Activated B cell treated with CpG ODN at 0.5 μM for 24 hours (primary cell): ENCODE measurements at regions of chr5 and their contacts with region 1.

Region 1: GRCh38 chr5:115169487-115170133 is at the start of gene TRIM36:
- DNase-seq: peak; percentile 98
- ATAC-seq: peak; percentile 92
- H3K4me3 Mint-ChIP-seq: peak within 1 kb of the TSS; percentile 92
- H3K27ac Mint-ChIP-seq: peak within 1 kb of the TSS; percentile 69
- H3K4me1 Mint-ChIP-seq: peaks cover 16% of the 10 kb centered on the region
- H3K27me3 Mint-ChIP-seq: peaks cover 39% of the 10 kb centered on the region
- CTCF ChIP-seq: no peak
- total RNA-seq, gene TRIM36: 7.5 and 8.9 TPM in 2 replicates

Region 2: GRCh38 chr5:113513384-113514288 is 1656.0 kb before region 1 on chr5 and contains the start of gene YTHDC2:
- CTCF ChIA-PET with region 1: no interaction called
- POLR2A ChIA-PET with region 1: interaction called, 12 read pairs
- intact Hi-C with region 1: no loop called
- DNase-seq: peak; percentile 86
- ATAC-seq: peak; percentile 98
- H3K4me3 Mint-ChIP-seq: peak within 1 kb of the TSS; percentile 92
- H3K27ac Mint-ChIP-seq: peak within 1 kb of the TSS; percentile 87
- H3K4me1 Mint-ChIP-seq: peaks cover 28% of the 10 kb centered on the region
- H3K27me3 Mint-ChIP-seq: peaks cover 12% of the 10 kb centered on the region
- CTCF ChIP-seq: no peak
- total RNA-seq, gene YTHDC2: 41.7 and 44.8 TPM in 2 replicates

Region 3: DNA sequence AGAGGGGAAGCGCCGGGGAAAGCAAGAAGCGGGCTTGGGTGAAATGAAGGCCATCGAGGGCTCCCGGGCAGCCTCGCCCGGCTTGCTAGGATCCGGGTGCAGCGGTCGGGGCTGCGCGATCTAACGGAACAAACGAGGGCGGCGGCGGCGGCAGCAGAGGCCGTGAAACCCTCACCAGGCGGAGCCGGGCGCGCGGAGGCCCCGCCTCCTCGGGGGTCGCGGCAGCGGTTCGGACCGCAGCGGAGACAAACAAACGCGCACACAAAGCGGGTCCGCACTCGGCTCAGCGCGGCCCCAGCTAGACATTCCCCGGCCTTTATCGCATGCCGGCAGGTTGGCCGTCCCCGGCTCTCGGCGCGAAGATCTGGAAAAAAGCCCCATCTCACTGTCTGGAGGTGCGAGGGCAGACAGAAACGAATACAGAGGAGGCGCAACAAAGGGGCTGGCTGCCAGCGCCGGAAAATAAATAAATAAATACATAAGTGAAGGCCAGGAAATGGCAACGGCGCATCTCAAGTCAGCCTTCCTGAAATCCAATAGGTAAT is 10.6 kb after region 1 on chr5:
- CTCF ChIA-PET with region 1: no interaction called
- POLR2A ChIA-PET with region 1: no interaction called
- intact Hi-C with region 1: loop called (anchors 1 kb)
- DNase-seq: peak; percentile 49
- ATAC-seq: peak; percentile 79
- H3K4me3 Mint-ChIP-seq: peak overlapping the region; percentile 87
- H3K27ac Mint-ChIP-seq: no peak overlapping the region
- H3K4me1 Mint-ChIP-seq: peaks cover 11% of the 10 kb centered on the region
- H3K27me3 Mint-ChIP-seq: peaks cover 74% of the 10 kb centered on the region
- CTCF ChIP-seq: no peak

Region 4: GRCh38 chr5:115262321-115263077 is 92.9 kb after region 1 on chr5 and contains the start of gene PGGT1B:
- CTCF ChIA-PET with region 1: no interaction called
- POLR2A ChIA-PET with region 1: interaction called, 5 read pairs
- intact Hi-C with region 1: loop called (anchors 1 kb)
- DNase-seq: peak; percentile 63
- ATAC-seq: peak; percentile 91
- H3K4me3 Mint-ChIP-seq: peak within 1 kb of the TSS; percentile 99
- H3K27ac Mint-ChIP-seq: peak within 1 kb of the TSS; percentile 96
- H3K4me1 Mint-ChIP-seq: peaks cover 52% of the 10 kb centered on the region
- H3K27me3 Mint-ChIP-seq: no peaks in the 10 kb centered on the region
- CTCF ChIP-seq: no peak
- total RNA-seq, gene PGGT1B: 52.1 and 52.9 TPM in 2 replicates

Region 5: DNA sequence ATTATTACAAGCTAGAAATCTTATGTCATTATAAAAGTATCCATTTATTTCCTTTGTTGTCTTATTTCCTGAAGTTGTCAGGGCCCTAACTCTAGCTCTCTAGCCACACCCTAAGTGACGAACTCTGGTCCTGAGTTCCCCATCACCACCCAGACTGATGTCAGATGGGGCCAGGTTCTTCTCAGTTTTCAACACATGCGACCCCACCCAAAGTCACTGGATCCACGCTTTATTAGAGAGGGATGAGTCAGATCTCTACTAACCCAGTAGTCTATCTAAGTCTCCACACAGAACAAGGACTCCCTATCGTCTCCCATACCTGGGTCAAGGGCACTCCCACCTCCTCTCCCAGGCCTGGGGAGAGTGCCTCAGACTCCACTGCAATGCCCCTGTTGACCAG is 381.8 kb after region 1 on chr5:
- CTCF ChIA-PET with region 1: no interaction called
- POLR2A ChIA-PET with region 1: no interaction called
- intact Hi-C with region 1: no loop called
- DNase-seq: no peak
- ATAC-seq: peak; percentile 18
- H3K4me3 Mint-ChIP-seq: no peak overlapping the region
- H3K27ac Mint-ChIP-seq: no peak overlapping the region
- H3K4me1 Mint-ChIP-seq: peaks cover 3% of the 10 kb centered on the region
- H3K27me3 Mint-ChIP-seq: no peaks in the 10 kb centered on the region
- CTCF ChIP-seq: no peak

Region 6: GRCh38 chr5:116076496-116076895 is 906.9 kb after region 1 on chr5:
- CTCF ChIA-PET with region 1: no interaction called
- POLR2A ChIA-PET with region 1: no interaction called
- intact Hi-C with region 1: loop called (anchors 10 kb)
- DNase-seq: no peak
- ATAC-seq: peak; percentile 95
- H3K4me3 Mint-ChIP-seq: peak overlapping the region; percentile 76
- H3K27ac Mint-ChIP-seq: peak overlapping the region; percentile 88
- H3K4me1 Mint-ChIP-seq: peaks cover 29% of the 10 kb centered on the region
- H3K27me3 Mint-ChIP-seq: no peaks in the 10 kb centered on the region
- CTCF ChIP-seq: no peak